ENCODE measurements at regions of chr1 and their contacts with region 1.

Region 1: GRCh38 chr1:62746085-62746808 is 37.7 kb upstream of the ATG4C start:
- DNase-seq: no peak
- ATAC-seq: peak; percentile 59

Region 2: DNA sequence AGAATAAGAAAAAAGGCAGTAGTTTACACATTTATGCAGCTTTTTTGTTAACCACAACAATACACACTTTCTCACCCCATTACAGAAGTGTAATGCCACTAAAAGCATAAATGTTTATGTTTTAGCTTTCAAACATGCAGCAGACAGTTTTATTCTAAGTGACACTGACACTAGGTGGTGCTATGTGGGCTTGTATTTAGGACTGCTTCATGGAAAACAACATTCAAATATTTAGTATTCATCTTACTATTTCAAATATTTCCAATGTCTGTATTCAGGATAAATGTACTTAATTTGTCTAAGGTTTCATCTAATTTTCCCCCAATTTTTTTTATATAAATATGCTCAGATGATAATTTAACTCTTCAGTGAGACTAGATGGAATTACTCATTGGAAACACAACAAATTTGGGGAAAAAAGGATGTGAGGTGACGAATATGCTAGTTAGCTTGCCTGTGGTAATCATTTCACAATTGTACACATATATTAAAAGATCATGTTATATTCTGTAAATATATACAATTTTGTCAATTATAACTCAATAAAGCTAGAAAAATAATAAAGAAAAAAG is 238.0 kb before region 1 on chr1:
- intact Hi-C with region 1: loop called in 1 of 2 experiments (anchors 5 kb)
- DNase-seq: no peak
- ATAC-seq: peak; percentile 69

Region 3: DNA sequence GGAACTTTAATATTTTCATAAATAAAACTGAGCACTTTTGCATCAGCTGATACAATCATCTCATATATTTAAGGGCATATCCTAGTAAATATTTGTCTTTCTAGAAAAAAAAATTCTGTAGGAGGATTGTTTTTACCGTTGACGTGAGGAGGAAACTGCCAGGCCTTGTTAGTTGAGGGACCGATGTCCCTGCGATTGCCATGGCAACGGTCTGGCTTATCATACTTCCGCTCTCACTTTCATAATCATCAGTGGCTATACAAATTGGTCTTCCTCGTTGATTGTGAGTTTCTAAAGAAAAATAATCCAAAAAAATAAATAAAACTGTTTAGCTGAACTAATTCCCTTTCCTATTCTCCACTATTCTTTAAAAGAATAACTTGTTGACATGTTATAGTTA is 218.2 kb before region 1 on chr1:
- intact Hi-C with region 1: loop called in 1 of 2 experiments (anchors 5 kb)
- DNase-seq: no peak
- ATAC-seq: no peak

Region 4: DNA sequence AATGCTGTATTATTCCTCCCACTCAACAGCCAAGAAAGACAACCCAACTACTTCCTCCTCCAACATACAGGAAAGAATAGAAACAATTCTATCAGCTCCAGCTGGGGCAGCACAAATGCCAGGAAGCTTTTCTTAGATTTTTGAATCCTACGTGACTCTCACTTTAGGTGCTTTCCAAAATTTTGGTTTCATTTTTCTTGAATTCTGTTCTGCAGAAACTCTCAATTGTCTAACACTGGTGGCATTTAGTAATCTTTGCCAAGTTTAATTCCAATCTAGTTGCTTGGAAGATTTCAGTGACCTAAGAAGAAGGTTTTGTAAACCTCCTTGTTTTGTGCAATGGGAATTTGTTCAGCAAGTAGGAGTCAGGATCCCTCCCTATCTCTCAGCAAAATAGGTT is 21.0 kb before region 1 on chr1:
- intact Hi-C with region 1: no loop called
- DNase-seq: no peak
- ATAC-seq: peak; percentile 49

Measured in left colon (tissue), 2 donors.